BJ (cell line): ENCODE measurements at regions of chr6 and their contacts with region 1.

Region 1: DNA sequence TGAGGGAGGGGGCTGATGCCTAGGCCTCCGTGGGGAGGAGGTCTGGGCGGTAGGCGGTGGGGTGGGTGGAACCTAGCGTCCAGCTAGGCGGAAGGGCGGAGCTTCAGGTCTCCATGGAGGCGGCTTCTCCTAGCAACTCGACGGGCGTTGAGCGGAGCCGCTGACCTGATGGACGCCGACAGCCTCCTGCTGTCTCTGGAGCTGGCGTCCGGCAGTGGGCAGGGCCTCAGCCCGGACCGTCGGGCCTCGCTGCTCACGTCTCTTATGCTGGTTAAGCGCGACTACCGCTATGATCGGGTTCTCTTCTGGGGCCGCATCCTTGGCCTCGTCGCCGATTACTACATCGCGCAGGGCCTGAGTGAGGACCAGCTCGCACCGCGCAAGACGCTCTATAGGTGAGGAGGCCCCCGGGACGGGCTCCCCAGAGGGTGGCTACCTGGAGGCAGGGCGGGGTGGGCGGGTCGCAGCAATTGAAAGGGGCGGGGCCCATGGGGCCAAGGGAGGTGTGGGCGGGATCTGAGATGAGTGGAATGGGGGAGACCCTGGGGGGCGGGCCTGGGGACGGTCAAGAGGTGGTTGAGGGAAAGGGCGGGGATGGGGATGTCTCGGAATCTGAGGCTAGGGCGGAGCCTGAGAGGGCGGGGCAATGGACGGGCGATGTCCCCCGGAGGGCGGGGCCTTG is at the start of gene RSPH9:
- DNase-seq: no peak
- H3K4me3 ChIP-seq: peak within 1 kb of the TSS; percentile 47
- H3K27me3 ChIP-seq: no peaks in the 10 kb centered on the region
- CTCF ChIP-seq: no peak
- polyA plus RNA-seq, gene RSPH9: 0.65 and 0.77 TPM in 2 replicates

Region 2: GRCh38 chr6:43629505-43630300 is 15.4 kb before region 1 on chr6:
- CTCF ChIA-PET with region 1: no interaction called
- POLR2A ChIA-PET with region 1: interaction called, 10 read pairs
- DNase-seq: peak; percentile 85
- H3K4me3 ChIP-seq: peak overlapping the region; percentile 80
- H3K27me3 ChIP-seq: no peaks in the 10 kb centered on the region
- CTCF ChIP-seq: no peak